Activated CD4-positive, alpha-beta T cell treated with anti-CD3 and anti-CD28 coated beads, Interleukin-2, amount 10 ng/mL, durations not matched to agents 24 days and 14 days (primary cell): ENCODE measurements at regions of chrX and their contacts with region 1.

Region 1: GRCh38 chrX:49043220-49043986 is at the start of gene TFE3:
- DNase-seq: peak; percentile 98
- H3K4me3 Mint-ChIP-seq: peak within 1 kb of the TSS; percentile 88
- H3K27ac Mint-ChIP-seq: peak within 1 kb of the TSS; percentile 95
- H3K4me1 Mint-ChIP-seq: peaks cover 31% of the 10 kb centered on the region
- H3K27me3 Mint-ChIP-seq: no peaks in the 10 kb centered on the region
- total RNA-seq, gene TFE3: 28.8 and 30.8 TPM in 2 replicates

Region 2: GRCh38 chrX:48957827-48958634 is 85.4 kb before region 1 on chrX:
- intact Hi-C with region 1: loop called (anchors 1 kb)
- DNase-seq: peak; percentile 97
- H3K4me3 Mint-ChIP-seq: peak overlapping the region; percentile 98
- H3K27ac Mint-ChIP-seq: peak overlapping the region; percentile 100
- H3K4me1 Mint-ChIP-seq: peaks cover 36% of the 10 kb centered on the region
- H3K27me3 Mint-ChIP-seq: no peaks in the 10 kb centered on the region

Region 3: GRCh38 chrX:48972220-48973167 is 70.9 kb before region 1 on chrX:
- intact Hi-C with region 1: loop called (anchors 5 kb)
- DNase-seq: peak; percentile 75
- H3K4me3 Mint-ChIP-seq: peak overlapping the region; percentile 35
- H3K27ac Mint-ChIP-seq: no peak overlapping the region
- H3K4me1 Mint-ChIP-seq: peaks cover 12% of the 10 kb centered on the region
- H3K27me3 Mint-ChIP-seq: no peaks in the 10 kb centered on the region

Region 4: DNA sequence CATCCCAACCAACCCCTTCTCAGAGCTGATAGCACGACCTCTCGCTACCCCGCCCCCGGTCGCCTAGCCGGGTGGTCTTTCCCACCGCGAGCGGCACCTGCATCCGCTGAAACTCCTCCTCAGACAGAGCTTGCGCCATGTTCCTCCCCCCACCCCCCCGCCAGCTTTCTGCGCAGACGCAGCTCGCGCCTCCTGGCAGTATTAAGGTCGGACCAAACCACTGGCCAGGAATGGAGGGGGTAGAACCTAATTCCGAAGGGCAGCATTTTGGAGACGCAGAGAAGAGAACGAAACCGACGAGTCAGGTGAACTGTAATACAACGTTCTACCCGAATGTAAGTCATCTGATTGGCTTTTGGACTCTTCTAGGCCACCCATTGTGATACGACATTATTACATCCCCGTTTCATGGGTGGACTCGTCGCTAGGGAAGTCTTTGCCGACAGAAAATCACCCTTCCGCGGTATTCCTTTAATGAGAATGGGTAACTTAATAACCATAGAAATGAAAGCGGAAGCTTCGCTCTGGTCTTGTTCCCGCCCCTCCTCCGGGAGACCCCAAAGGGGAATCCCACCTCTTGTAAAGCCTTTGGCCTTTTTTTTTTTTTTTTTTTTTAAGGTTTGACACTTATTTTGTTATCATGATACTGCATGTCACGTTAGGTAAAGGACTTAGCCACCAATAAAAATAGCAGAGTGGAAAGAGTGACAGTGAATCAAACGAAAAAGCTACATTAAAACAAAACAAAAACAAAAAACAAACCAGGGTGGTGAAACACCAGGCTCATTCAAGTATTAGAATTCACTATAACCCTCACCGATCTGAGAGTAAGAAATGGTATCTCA is 41.1 kb before region 1 on chrX and contains the start of gene GRIPAP1:
- intact Hi-C with region 1: loop called (anchors 1 kb)
- DNase-seq: peak; percentile 92
- H3K4me3 Mint-ChIP-seq: peak within 1 kb of the TSS; percentile 99
- H3K27ac Mint-ChIP-seq: peak within 1 kb of the TSS; percentile 98
- H3K4me1 Mint-ChIP-seq: peaks cover 28% of the 10 kb centered on the region
- H3K27me3 Mint-ChIP-seq: no peaks in the 10 kb centered on the region
- total RNA-seq, gene GRIPAP1: 85.7 and 87.3 TPM in 2 replicates

Region 5: GRCh38 chrX:49053223-49054072 is 10.0 kb after region 1 on chrX:
- intact Hi-C with region 1: loop called (anchors 1 kb)
- DNase-seq: peak; percentile 87
- H3K4me3 Mint-ChIP-seq: peak overlapping the region; percentile 81
- H3K27ac Mint-ChIP-seq: peak overlapping the region; percentile 83
- H3K4me1 Mint-ChIP-seq: peaks cover 22% of the 10 kb centered on the region
- H3K27me3 Mint-ChIP-seq: peaks cover 2% of the 10 kb centered on the region